ENCODE measurements at regions of chr15 and their contacts with region 1.

Region 1: GRCh38 chr15:65184868-65185738 is at the start of gene CLPX:
- DNase-seq: peak; percentile 78
- H3K4me3 ChIP-seq: peak within 1 kb of the TSS; percentile 92
- H3K27ac ChIP-seq: peak within 1 kb of the TSS; percentile 84
- H3K27me3 ChIP-seq: no peaks in the 10 kb centered on the region
- CTCF ChIP-seq: no peak
- polyA plus RNA-seq, gene CLPX: 39.2 and 58.3 TPM in 2 replicates

Region 2: GRCh38 chr15:65275728-65276126 is 90.6 kb after region 1 on chr15:
- CTCF ChIA-PET with region 1: interaction called, 100 read pairs
- POLR2A ChIA-PET with region 1: interaction called, 5 read pairs
- DNase-seq: no peak
- H3K4me3 ChIP-seq: no peak overlapping the region
- H3K27ac ChIP-seq: peak overlapping the region; percentile 21
- H3K27me3 ChIP-seq: no peaks in the 10 kb centered on the region
- CTCF ChIP-seq: no peak

Region 3: GRCh38 chr15:65286704-65287519 is 101.8 kb after region 1 on chr15 and contains the start of gene PARP16:
- CTCF ChIA-PET with region 1: interaction called, 4 read pairs
- POLR2A ChIA-PET with region 1: interaction called, 10 read pairs
- DNase-seq: peak; percentile 24
- H3K4me3 ChIP-seq: peak within 1 kb of the TSS; percentile 67
- H3K27ac ChIP-seq: peak within 1 kb of the TSS; percentile 21
- H3K27me3 ChIP-seq: no peaks in the 10 kb centered on the region
- CTCF ChIP-seq: peak; percentile 24; the same call in 1 of the 2 replicates
- polyA plus RNA-seq, gene PARP16: 4.5 and 5.3 TPM in 2 replicates

Region 4: GRCh38 chr15:65298731-65299130 is 113.6 kb after region 1 on chr15:
- CTCF ChIA-PET with region 1: interaction called, 24 read pairs
- POLR2A ChIA-PET with region 1: interaction called, 55 read pairs
- DNase-seq: no peak
- H3K4me3 ChIP-seq: no peak overlapping the region
- H3K27ac ChIP-seq: no peak overlapping the region
- H3K27me3 ChIP-seq: no peaks in the 10 kb centered on the region
- CTCF ChIP-seq: no peak

Region 5: DNA sequence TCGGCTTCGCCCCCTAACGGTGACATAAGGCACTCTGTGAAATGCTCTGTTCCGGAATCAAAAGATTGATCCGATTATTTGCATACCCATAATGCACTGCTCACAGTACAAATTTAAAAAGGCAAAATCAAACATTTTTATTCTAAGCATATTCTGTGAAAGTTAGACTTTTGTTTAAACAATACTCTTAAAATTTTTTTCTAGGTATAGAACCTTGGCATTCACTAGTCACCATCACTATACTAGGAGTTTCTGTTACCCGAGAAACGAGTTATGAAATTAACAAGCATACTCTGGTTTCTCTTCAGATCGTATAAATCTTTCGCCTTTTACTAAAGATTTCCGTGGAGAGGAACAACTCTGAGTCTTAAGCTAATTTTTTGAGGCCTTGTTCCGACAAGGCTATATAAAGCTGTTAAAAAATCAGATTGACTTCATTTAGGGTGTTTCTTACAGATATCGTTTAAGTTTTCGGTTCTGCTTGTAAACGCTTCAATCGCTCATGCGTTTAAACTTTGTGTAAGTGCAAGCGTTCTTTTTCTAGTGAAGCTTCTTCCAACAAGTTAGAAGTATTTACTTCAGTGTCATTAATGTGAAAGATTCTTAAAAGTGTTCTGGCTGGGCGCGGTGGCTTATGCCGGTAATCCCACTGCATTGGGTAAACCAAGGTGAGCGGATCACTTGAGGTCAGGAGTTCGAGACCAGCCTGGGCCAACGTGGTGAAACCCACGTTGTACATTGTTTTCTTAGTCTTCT is 119.5 kb after region 1 on chr15 and contains the start of gene RNU5B-1:
- CTCF ChIA-PET with region 1: interaction called, 5 read pairs
- POLR2A ChIA-PET with region 1: interaction called, 55 read pairs
- DNase-seq: peak; percentile 95
- H3K4me3 ChIP-seq: peak within 1 kb of the TSS; percentile 58
- H3K27ac ChIP-seq: peak within 1 kb of the TSS; percentile 58
- H3K27me3 ChIP-seq: no peaks in the 10 kb centered on the region
- CTCF ChIP-seq: peak; percentile 89
- polyA plus RNA-seq, gene RNU5B-1: not detected in 2 replicates

Region 6: GRCh38 chr15:66386204-66387123 is 1201.4 kb after region 1 on chr15 and contains the start of gene MAP2K1:
- CTCF ChIA-PET with region 1: no interaction called
- POLR2A ChIA-PET with region 1: interaction called, 15 read pairs
- DNase-seq: peak; percentile 89
- H3K4me3 ChIP-seq: peak within 1 kb of the TSS; percentile 77
- H3K27ac ChIP-seq: peak within 1 kb of the TSS; percentile 86
- H3K27me3 ChIP-seq: no peaks in the 10 kb centered on the region
- CTCF ChIP-seq: peak; percentile 67
- polyA plus RNA-seq, gene MAP2K1: 18.4 and 18.8 TPM in 2 replicates